ENCODE measurements at regions of chr7 and their contacts with region 1.

Region 1: DNA sequence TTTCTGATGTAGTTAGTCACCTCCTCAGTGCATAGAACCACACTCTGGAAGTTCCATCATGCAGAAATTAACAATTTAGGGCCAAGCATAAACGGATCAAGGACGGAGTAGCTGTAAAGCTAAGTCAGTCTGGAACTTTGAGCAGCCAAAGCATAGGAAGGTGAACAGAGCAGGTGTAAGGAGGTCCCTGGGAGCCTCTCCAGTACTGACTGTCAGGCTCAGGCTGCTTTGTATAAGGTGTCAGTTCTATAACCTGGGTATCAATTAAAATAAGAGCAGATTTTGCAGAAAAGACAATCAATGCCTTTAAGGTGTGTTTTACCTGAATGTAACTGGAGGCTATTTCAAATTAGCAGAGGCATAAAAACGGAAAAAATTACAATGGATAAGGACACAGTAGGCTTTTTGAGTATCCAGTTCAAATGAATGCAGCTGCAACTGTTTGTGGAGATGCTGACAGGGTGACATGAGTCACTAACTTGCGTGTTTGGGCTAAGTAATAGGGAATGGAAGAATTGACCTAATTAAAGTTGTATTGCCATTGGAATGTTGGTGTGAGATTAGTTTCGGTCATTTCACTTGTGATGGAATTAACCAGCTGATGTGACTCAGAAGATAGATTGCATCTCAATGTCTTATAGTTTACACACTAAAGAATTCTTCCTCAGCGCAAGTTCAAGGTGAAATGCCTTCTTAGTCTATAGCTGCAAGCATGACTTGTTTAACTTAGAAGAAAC is 417.9 kb upstream of the CNTNAP2 start:
- DNase-seq: peak; percentile 12 to 72
- H3K4me3 ChIP-seq: no peak overlapping the region
- H3K27ac ChIP-seq: no peak overlapping the region
- H3K4me1 ChIP-seq: no peaks in the 10 kb centered on the region
- H3K27me3 ChIP-seq: no peaks in the 10 kb centered on the region
- CTCF ChIP-seq: no peak

Region 2: GRCh38 chr7:145644426-145645154 is 54.1 kb before region 1 on chr7:
- CTCF ChIA-PET with region 1: no interaction called
- POLR2A ChIA-PET with region 1: no interaction called
- intact Hi-C with region 1: loop called (anchors 2 kb)
- DNase-seq: peak; percentile 83 to 87
- H3K4me3 ChIP-seq: no peak overlapping the region
- H3K27ac ChIP-seq: peak overlapping the region; percentile 97
- H3K4me1 ChIP-seq: peaks cover 31% of the 10 kb centered on the region
- H3K27me3 ChIP-seq: no peaks in the 10 kb centered on the region
- CTCF ChIP-seq: no peak

Region 3: DNA sequence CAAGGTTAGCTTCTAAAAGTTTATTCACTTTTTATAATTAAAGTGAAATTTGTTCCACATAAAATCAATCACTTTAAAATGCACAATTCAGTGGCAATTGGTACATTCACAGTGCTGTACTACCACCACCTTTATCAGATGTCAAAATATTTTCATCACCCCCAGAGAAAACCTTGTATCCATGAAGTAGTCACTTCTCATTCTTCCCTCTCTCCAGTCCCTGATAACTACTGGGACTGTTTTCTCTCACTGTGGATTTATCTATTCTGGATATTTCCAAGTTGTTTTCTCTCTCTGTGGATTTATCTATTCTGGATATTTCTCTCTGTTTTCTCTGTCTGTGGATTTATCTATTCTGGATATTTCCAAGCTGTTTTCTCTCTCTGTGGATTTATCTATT is 17.5 kb before region 1 on chr7:
- CTCF ChIA-PET with region 1: no interaction called
- POLR2A ChIA-PET with region 1: no interaction called
- intact Hi-C with region 1: loop called (anchors 2 kb)
- DNase-seq: no peak
- H3K4me3 ChIP-seq: no peak overlapping the region
- H3K27ac ChIP-seq: no peak overlapping the region
- H3K4me1 ChIP-seq: no peaks in the 10 kb centered on the region
- H3K27me3 ChIP-seq: no peaks in the 10 kb centered on the region
- CTCF ChIP-seq: no peak

Measured in PC-9 (cell line).